Upper lobe of right lung (tissue), 1 donor: ENCODE measurements at regions of chrX and their contacts with region 1.

Region 1: GRCh38 chrX:130196466-130196865 is 24.7 kb downstream of the RAB33A start:
- DNase-seq: no peak
- ATAC-seq: no peak
- H3K4me3 ChIP-seq: no peak overlapping the region
- H3K27ac ChIP-seq: no peak overlapping the region
- H3K4me1 ChIP-seq: no peaks in the 10 kb centered on the region
- H3K27me3 ChIP-seq: no peaks in the 10 kb centered on the region
- CTCF ChIP-seq: no peak

Region 2: DNA sequence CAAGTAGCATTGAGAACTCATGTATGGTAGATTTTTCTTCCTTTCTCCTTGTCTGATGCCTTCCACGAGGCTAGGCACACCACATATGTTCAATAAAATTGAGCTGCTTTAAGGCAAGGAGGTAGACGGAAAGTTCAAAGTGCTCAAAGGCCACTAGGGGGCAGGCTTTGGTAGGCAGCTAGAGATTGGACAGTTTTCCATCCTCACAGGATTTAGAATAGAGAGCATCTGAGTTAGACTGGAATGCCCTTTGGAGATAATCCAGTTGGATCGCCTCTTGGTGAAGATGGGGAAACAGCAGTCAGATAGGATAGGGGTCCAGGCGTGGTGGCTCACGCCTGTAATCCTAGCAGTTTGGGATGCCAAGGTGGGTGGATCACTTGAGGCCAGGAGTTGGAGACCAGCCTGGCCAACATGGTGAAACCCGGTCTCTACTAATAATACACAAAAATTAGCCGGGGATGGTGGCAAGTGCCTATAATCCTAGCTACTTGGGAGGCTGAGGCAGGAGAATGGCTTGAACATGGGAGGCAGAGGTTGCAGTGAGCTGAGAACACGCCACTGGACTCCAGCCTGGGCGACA is 116.6 kb before region 1 on chrX:
- intact Hi-C with region 1: loop called (anchors 10 kb)
- DNase-seq: no peak
- ATAC-seq: peak; percentile 62
- H3K4me3 ChIP-seq: no peak overlapping the region
- H3K27ac ChIP-seq: no peak overlapping the region
- H3K4me1 ChIP-seq: no peaks in the 10 kb centered on the region
- H3K27me3 ChIP-seq: no peaks in the 10 kb centered on the region
- CTCF ChIP-seq: peak; percentile 67

Region 3: DNA sequence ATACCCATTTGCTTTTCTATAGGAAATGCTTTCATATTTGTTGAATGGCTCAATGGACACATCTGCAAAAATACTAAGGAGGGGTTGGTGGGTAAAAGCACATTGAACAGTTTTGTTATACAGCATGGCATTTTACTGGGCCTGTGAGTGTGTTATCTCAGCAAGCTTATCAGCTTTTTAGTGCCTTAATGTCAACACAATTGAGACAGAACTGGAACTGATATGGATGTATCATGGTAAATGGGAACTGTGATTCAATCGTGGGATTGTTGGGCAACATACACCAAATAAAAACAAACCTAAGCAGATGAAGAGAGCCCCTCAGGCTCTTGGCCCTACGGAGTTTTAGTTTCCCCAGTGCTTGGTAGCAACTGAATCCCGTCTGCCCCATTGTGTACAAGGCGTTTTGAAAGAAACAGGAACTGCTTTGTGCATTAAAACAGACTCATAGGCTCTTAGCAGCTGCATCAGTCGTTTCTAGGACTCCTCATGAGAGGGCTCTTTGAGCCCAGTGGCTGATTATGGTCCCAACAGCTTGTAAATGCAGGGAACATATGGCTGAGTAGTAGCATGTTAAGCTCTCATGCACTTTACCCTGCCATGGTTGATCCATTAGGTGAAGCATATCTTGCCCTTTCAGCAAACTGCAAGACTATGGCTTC is 181.7 kb after region 1 on chrX:
- intact Hi-C with region 1: no loop called
- DNase-seq: no peak
- ATAC-seq: no peak
- H3K4me3 ChIP-seq: no peak overlapping the region
- H3K27ac ChIP-seq: no peak overlapping the region
- H3K4me1 ChIP-seq: no peaks in the 10 kb centered on the region
- H3K27me3 ChIP-seq: no peaks in the 10 kb centered on the region
- CTCF ChIP-seq: no peak